ENCODE measurements at regions of chr11 and their contacts with region 1.

Region 1: GRCh38 chr11:88016392-88017170 is 158.7 kb downstream of the RAB38 start:
- DNase-seq: peak; percentile 84
- H3K4me3 ChIP-seq: no peak overlapping the region
- H3K27ac ChIP-seq: no peak overlapping the region
- H3K4me1 ChIP-seq: no peaks in the 10 kb centered on the region
- H3K27me3 ChIP-seq: no peaks in the 10 kb centered on the region
- CTCF ChIP-seq: peak; percentile 58 to 68
- POLR2A ChIP-seq: no peak

Region 2: GRCh38 chr11:87892291-87892690 is 124.3 kb before region 1 on chr11:
- CTCF ChIA-PET with region 1: no interaction called
- POLR2A ChIA-PET with region 1: no interaction called
- dilution Hi-C with region 1: no loop called
- intact Hi-C with region 1: no loop called
- DNase-seq: no peak
- H3K4me3 ChIP-seq: no peak overlapping the region
- H3K27ac ChIP-seq: no peak overlapping the region
- H3K4me1 ChIP-seq: no peaks in the 10 kb centered on the region
- H3K27me3 ChIP-seq: no peaks in the 10 kb centered on the region
- CTCF ChIP-seq: no peak
- POLR2A ChIP-seq: no peak

Region 3: GRCh38 chr11:87974797-87975196 is 41.8 kb before region 1 on chr11:
- CTCF ChIA-PET with region 1: interaction called, 13 read pairs
- POLR2A ChIA-PET with region 1: no interaction called
- dilution Hi-C with region 1: no loop called
- intact Hi-C with region 1: no loop called
- DNase-seq: no peak
- H3K4me3 ChIP-seq: no peak overlapping the region
- H3K27ac ChIP-seq: no peak overlapping the region
- H3K4me1 ChIP-seq: no peaks in the 10 kb centered on the region
- H3K27me3 ChIP-seq: no peaks in the 10 kb centered on the region
- CTCF ChIP-seq: no peak
- POLR2A ChIP-seq: no peak

Region 4: GRCh38 chr11:88231894-88232482 is 215.4 kb after region 1 on chr11:
- CTCF ChIA-PET with region 1: interaction called, 26 read pairs
- POLR2A ChIA-PET with region 1: no interaction called
- dilution Hi-C with region 1: no loop called
- intact Hi-C with region 1: loop called (anchors 1 kb)
- DNase-seq: peak; percentile 59
- H3K4me3 ChIP-seq: no peak overlapping the region
- H3K27ac ChIP-seq: no peak overlapping the region
- H3K4me1 ChIP-seq: no peaks in the 10 kb centered on the region
- H3K27me3 ChIP-seq: no peaks in the 10 kb centered on the region
- CTCF ChIP-seq: peak; percentile 48 to 63
- POLR2A ChIP-seq: no peak

Region 5: DNA sequence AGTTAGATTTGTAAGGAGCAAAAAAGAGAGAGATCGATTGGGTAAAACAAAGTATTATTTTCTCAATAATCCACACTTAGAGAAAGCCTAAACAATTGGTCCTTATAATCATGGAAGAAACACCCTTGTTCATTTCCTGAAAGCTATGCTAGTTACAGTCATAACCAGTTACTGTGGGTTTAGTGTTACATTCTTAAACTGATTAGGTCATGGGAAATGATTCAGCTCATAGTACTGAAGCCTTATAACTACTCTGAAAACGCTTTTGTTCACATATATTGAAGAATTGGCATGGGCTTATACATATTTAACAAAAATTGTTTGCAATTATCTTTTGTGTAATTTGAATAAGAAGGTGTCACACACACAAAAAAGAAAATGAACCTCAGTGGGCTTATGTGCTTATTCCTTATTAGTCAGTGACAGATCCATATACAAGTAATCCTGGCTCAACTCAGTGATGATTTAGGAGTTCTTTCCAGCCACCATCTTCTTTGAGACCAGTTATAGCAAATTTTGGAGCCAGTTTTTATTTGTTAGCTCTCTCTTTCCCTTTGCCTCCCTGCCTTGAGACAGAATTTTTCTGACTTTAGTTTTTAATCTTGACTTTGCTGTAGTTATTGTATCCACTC is 519.5 kb after region 1 on chr11:
- CTCF ChIA-PET with region 1: interaction called, 226 read pairs
- POLR2A ChIA-PET with region 1: no interaction called
- dilution Hi-C with region 1: no loop called
- intact Hi-C with region 1: no loop called
- DNase-seq: peak; percentile 92
- H3K4me3 ChIP-seq: no peak overlapping the region
- H3K27ac ChIP-seq: peak overlapping the region; percentile 88
- H3K4me1 ChIP-seq: peaks cover 37% of the 10 kb centered on the region
- H3K27me3 ChIP-seq: no peaks in the 10 kb centered on the region
- CTCF ChIP-seq: no peak
- POLR2A ChIP-seq: peak; percentile 25

Region 6: DNA sequence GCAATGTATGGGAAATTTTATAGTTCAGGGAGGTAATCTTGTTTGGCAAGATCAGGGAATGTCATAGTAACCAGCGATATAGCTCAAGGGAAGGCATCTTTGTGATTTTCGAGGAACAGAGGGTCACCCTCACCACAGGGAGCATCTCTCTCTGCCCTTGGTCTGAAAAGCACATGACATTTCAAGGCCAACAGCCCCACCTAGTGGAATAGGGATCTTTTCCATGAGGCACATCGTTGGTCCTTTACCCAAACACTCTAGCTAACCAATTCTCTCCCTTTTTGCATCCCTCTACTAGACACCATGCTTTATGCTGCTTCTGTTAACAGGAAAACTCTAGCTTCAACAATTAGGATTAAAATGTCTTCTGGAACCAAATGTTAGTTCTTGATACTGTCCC is 870.2 kb after region 1 on chr11:
- CTCF ChIA-PET with region 1: interaction called, 31 read pairs
- POLR2A ChIA-PET with region 1: no interaction called
- dilution Hi-C with region 1: no loop called
- intact Hi-C with region 1: loop called (anchors 1 kb)
- DNase-seq: peak; percentile 39
- H3K4me3 ChIP-seq: no peak overlapping the region
- H3K27ac ChIP-seq: no peak overlapping the region
- H3K4me1 ChIP-seq: no peaks in the 10 kb centered on the region
- H3K27me3 ChIP-seq: no peaks in the 10 kb centered on the region
- CTCF ChIP-seq: peak; percentile 33 to 43
- POLR2A ChIP-seq: no peak

Measured in endothelial cell of umbilical vein (primary cell).